ENCODE measurements at regions of chr11 and their contacts with region 1.

Region 1: GRCh38 chr11:86802601-86803051 is 2.3 kb downstream of the PRSS23 start:
- DNase-seq: peak; percentile 46 to 93
- H3K4me3 ChIP-seq: peak overlapping the region; percentile 92
- H3K27ac ChIP-seq: peak overlapping the region; percentile 68
- H3K4me1 ChIP-seq: peaks cover 48% of the 10 kb centered on the region
- H3K27me3 ChIP-seq: no peaks in the 10 kb centered on the region
- CTCF ChIP-seq: peak; percentile 89

Region 2: DNA sequence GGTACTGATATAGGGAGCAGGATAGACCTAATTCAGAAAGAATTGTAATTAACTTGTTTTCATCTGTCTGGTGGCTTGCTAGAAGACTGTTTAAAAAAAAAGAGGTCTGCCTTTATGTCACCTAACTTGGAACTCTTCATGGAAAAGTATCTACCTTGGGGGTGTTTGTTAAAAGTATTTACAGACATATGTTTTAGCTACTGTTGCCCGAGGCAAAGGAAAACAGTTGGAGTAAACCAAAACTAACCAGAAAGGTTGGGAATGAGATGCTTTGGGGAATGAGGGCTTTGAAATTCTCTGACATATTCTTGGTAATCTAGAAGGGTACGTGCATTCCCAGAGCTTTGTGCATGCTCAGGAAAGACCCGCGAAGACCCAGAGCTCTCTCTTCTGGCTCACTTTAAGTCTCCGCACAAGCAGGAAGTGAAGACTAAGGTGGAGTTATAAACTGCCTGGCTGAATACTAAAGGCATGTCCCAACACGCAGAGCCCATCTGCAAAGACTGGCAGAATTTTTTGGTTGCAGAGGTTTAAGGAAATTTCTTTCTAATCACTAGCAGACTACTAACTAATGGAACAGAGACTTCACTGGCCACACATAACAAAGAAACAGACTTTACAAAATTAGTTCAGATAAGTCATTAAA is 467.4 kb before region 1 on chr11:
- CTCF ChIA-PET with region 1: interaction called, 17 read pairs
- POLR2A ChIA-PET with region 1: no interaction called
- intact Hi-C with region 1: no loop called
- DNase-seq: no peak
- H3K4me3 ChIP-seq: no peak overlapping the region
- H3K27ac ChIP-seq: no peak overlapping the region
- H3K4me1 ChIP-seq: no peaks in the 10 kb centered on the region
- H3K27me3 ChIP-seq: no peaks in the 10 kb centered on the region
- CTCF ChIP-seq: no peak

Region 3: GRCh38 chr11:86592659-86593451 is 209.8 kb before region 1 on chr11:
- CTCF ChIA-PET with region 1: no interaction called
- POLR2A ChIA-PET with region 1: interaction called, 5 read pairs
- intact Hi-C with region 1: loop called (anchors 1 kb)
- DNase-seq: peak; percentile 91 to 100
- H3K4me3 ChIP-seq: no peak overlapping the region
- H3K27ac ChIP-seq: peak overlapping the region; percentile 97
- H3K4me1 ChIP-seq: peaks cover 66% of the 10 kb centered on the region
- H3K27me3 ChIP-seq: no peaks in the 10 kb centered on the region
- CTCF ChIP-seq: no peak

Region 4: DNA sequence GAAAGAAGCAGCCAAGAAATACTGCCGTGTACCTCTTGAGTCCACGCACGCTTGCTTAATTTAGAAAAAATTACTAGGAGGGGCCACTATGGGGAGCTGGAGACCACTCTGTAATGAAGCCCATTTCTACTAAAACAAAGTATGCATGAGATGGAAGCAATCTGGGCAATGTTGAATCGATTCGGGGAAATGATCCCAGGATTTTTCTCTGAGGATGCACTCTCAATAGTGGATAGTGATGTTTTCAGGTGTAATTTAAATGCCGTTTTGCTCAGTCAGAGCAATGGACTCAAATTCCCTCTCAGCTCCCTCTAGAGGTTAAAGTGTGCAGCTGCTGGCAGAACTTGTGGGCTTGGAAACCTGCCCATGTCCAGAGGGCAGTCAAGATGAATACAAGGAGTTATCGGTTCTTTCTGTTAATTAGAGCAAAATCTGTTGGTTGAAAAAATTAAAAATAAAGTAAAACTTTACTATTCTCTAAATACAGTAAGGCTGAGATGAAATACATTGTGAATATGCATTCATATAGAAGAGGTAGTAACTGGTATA is 194.3 kb before region 1 on chr11:
- CTCF ChIA-PET with region 1: interaction called, 3 read pairs
- POLR2A ChIA-PET with region 1: no interaction called
- intact Hi-C with region 1: loop called (anchors 5 kb)
- DNase-seq: peak; percentile 72 to 73
- H3K4me3 ChIP-seq: no peak overlapping the region
- H3K27ac ChIP-seq: no peak overlapping the region
- H3K4me1 ChIP-seq: peaks cover 22% of the 10 kb centered on the region
- H3K27me3 ChIP-seq: no peaks in the 10 kb centered on the region
- CTCF ChIP-seq: peak; percentile 96

Region 5: DNA sequence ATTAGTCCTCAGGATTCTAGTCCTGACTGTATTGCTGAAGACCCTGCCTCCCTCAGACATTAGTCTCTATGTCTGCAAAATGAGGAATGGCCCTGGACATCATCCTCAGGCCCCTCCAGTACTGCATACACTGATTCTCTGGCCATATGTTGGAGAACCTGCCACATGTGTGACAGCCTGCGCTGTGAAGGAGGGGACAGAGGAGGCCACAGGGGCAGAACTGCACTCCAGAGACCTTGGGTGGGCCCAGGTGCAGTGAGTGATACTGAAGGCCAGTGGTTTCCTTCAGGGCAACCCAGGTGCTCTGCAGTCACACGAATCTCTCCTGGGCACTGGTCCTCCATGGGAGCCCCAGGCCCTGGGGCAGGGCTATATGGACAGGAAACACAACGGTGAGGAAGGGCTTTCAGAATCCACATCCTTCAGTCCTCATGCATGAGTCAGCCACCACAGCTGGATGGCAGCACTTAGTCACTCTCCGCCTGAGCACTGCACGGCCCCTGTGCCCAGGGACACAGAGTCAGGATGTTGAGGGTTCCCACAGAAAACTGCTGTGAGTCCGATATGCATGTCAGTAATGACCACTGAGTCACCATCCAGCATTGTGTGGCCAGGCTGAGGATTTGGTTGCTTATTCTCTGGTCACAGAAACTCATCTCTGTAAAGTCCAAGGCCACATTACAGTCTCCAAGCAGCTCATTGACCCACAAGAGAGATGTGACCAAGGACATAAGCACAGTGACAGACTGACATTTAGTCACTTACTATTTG is 169.9 kb before region 1 on chr11:
- CTCF ChIA-PET with region 1: interaction called, 5 read pairs
- POLR2A ChIA-PET with region 1: interaction called, 3 read pairs
- intact Hi-C with region 1: loop called (anchors 1 kb)
- DNase-seq: peak; percentile 83 to 96
- H3K4me3 ChIP-seq: no peak overlapping the region
- H3K27ac ChIP-seq: peak overlapping the region; percentile 74
- H3K4me1 ChIP-seq: peaks cover 19% of the 10 kb centered on the region
- H3K27me3 ChIP-seq: no peaks in the 10 kb centered on the region
- CTCF ChIP-seq: peak; percentile 52

Region 6: DNA sequence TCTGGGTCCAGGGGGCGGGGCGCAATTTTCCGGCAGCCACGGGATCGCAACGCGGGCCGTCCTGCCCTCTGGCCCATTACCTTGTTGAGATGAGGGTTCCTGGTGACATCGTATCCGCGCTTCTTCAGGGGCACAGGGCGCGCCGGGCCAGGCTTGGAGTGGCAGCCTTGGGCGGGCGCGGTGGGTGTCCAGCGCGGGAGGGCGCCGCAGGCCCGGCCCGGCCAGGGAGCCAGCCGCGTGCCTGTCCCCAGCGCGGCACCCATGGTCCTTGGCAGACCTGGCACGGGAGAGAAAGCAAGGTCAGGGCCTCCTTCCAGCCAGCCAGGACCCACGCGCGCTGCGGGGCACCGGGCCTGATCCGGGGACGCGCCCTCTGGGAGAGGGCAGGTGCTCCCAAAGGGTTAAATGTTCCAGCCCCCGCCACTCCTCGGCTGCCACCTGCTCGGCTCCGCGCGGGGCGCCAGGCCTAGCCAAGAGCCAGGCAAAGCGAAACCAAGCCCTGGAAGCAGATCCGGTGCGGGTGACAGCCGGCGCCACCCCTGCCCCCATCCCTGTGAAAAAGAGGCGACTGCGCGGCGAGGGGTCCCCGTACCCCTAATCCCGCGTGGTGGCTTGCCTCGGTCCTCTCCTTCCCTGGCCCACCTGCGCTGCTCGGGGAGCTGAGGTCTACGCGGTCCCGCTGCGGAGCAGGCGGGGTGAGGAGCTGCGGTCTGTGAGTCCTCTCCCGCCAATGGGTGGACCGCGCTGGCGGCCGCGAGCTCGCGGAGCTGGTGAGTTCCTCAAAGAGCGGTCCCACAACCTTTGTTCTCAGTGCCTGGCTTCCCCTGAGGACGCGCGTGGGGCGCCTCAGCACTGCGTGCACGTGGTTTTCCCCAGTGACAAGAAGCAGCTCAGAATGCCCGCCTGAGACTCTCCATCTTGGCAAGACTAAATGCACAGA is 130.7 kb before region 1 on chr11 and contains the start of gene ME3:
- CTCF ChIA-PET with region 1: interaction called, 4 read pairs
- POLR2A ChIA-PET with region 1: interaction called, 4 read pairs
- intact Hi-C with region 1: loop called (anchors 1 kb)
- DNase-seq: peak; percentile 63 to 74
- H3K4me3 ChIP-seq: peak within 1 kb of the TSS; percentile 82
- H3K27ac ChIP-seq: peak within 1 kb of the TSS; percentile 87
- H3K4me1 ChIP-seq: peaks cover 52% of the 10 kb centered on the region
- H3K27me3 ChIP-seq: no peaks in the 10 kb centered on the region
- CTCF ChIP-seq: no peak
- total RNA-seq, gene ME3: 34.0 and 61.1 TPM in 2 replicates

Region 7: GRCh38 chr11:86760577-86760976 is 42.0 kb before region 1 on chr11:
- CTCF ChIA-PET with region 1: no interaction called
- POLR2A ChIA-PET with region 1: no interaction called
- intact Hi-C with region 1: no loop called
- DNase-seq: no peak
- H3K4me3 ChIP-seq: no peak overlapping the region
- H3K27ac ChIP-seq: no peak overlapping the region
- H3K4me1 ChIP-seq: no peaks in the 10 kb centered on the region
- H3K27me3 ChIP-seq: no peaks in the 10 kb centered on the region
- CTCF ChIP-seq: no peak

Region 8: DNA sequence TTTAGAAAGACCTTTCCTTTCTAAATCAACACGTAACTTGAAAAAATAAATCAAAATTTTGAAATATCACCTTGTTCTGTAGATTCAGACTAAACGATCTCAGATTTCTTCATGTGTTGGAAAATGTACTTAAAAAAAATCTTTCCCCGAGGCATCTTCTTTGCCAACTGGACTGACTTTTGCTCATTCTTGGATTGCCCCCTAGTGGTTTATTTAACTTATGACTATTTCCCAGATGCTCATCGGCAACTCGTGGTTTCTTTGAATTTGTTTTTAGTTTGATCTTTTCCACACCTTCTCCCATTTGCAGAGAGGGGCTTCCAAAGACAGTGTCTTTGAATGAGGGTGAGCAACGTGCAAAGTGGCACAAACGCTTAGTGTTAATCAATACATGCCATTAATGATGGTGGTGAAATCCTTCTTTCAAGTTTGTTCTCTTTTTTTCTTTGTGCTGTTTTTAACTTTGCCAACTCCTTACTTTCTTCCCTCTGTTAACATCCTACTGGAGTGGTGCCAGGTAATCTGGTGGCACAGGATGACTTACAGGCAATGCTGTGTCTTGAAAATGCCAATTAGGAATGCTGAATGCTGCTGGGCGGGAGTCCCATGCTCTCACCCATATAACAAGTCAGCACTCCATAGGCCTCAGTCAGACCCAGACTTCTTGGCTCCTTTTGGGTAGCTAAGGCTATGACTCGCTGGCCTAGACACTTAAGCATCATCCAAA is 16.0 kb after region 1 on chr11:
- CTCF ChIA-PET with region 1: no interaction called
- POLR2A ChIA-PET with region 1: no interaction called
- intact Hi-C with region 1: loop called (anchors 2 kb)
- DNase-seq: peak in 1 of 2 experiments; percentile 77
- H3K4me3 ChIP-seq: no peak overlapping the region
- H3K27ac ChIP-seq: no peak overlapping the region
- H3K4me1 ChIP-seq: peaks cover 20% of the 10 kb centered on the region
- H3K27me3 ChIP-seq: no peaks in the 10 kb centered on the region
- CTCF ChIP-seq: peak; percentile 94

Region 9: DNA sequence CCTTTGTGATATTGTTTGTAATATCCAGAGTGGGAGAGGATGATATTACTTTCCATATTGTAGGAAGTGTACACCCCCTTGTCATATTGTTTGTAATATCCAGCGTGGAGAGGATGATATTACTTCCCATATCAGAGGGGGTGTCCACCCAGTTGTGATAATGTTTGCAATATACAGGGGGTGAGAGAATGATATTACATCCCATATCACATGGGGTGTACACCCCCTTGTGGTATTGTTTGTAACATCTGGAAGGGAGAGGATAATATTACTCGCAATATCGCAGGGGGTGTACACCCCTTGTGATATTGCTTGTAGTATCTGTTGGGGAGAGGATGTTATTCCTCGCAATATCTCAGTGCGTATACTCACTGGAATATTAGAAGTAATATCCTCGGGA is 59.2 kb after region 1 on chr11:
- CTCF ChIA-PET with region 1: no interaction called
- POLR2A ChIA-PET with region 1: no interaction called
- intact Hi-C with region 1: no loop called
- DNase-seq: no peak
- H3K4me3 ChIP-seq: no peak overlapping the region
- H3K27ac ChIP-seq: no peak overlapping the region
- H3K4me1 ChIP-seq: no peaks in the 10 kb centered on the region
- H3K27me3 ChIP-seq: no peaks in the 10 kb centered on the region
- CTCF ChIP-seq: peak; percentile 40; the same call in 1 of the 2 replicates